T-cell (primary cell): ENCODE measurements at regions of chr1 and their contacts with region 1.

Region 1: GRCh38 chr1:194117582-194117981 is 931.2 kb upstream of the B3GALT2 start:
- DNase-seq: no peak
- ATAC-seq: no peak
- H3K4me3 ChIP-seq: no peak overlapping the region
- H3K4me3 Mint-ChIP-seq: no peak overlapping the region
- H3K27ac ChIP-seq: no peak overlapping the region
- H3K27ac Mint-ChIP-seq: no peak overlapping the region
- H3K4me1 ChIP-seq: no peaks in the 10 kb centered on the region
- H3K4me1 Mint-ChIP-seq: no peaks in the 10 kb centered on the region
- H3K27me3 ChIP-seq: no peaks in the 10 kb centered on the region
- H3K27me3 Mint-ChIP-seq: no peaks in the 10 kb centered on the region

Region 2: GRCh38 chr1:194069168-194069830 is 48.3 kb before region 1 on chr1:
- CTCF ChIA-PET with region 1: no interaction called
- POLR2A ChIA-PET with region 1: no interaction called
- DNase-seq: no peak
- ATAC-seq: no peak
- H3K4me3 ChIP-seq: no peak overlapping the region
- H3K4me3 Mint-ChIP-seq: no peak overlapping the region
- H3K27ac ChIP-seq: no peak overlapping the region
- H3K27ac Mint-ChIP-seq: no peak overlapping the region
- H3K4me1 ChIP-seq: no peaks in the 10 kb centered on the region
- H3K4me1 Mint-ChIP-seq: peaks cover 0 to under 1% (median 0%) of the 10 kb centered on the region in 3 donors
- H3K27me3 ChIP-seq: no peaks in the 10 kb centered on the region
- H3K27me3 Mint-ChIP-seq: no peaks in the 10 kb centered on the region

Region 3: DNA sequence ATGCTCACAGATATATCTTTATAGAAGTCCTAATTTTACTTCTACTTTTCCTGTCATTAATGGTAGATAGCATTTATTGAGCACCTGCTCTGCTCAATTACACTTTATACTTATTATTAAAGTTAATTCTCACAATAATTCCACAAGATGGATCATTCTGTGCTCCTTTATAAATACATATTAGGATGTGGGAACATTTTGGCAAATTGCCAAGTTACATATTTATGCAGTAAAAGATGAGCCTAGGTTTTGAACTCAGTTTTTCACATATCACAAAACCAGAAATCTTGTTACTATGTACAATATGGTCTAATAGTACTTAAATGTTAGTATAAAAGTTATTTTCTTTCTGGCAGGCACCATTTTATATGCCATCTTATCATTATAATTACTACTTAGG is 36.1 kb before region 1 on chr1:
- CTCF ChIA-PET with region 1: no interaction called
- POLR2A ChIA-PET with region 1: no interaction called
- DNase-seq: no peak
- ATAC-seq: no peak
- H3K4me3 ChIP-seq: no peak overlapping the region
- H3K4me3 Mint-ChIP-seq: no peak overlapping the region
- H3K27ac ChIP-seq: no peak overlapping the region
- H3K27ac Mint-ChIP-seq: no peak overlapping the region
- H3K4me1 ChIP-seq: no peaks in the 10 kb centered on the region
- H3K4me1 Mint-ChIP-seq: peaks cover 0 to 2% (median 2%) of the 10 kb centered on the region in 3 donors
- H3K27me3 ChIP-seq: no peaks in the 10 kb centered on the region
- H3K27me3 Mint-ChIP-seq: no peaks in the 10 kb centered on the region

Region 4: GRCh38 chr1:194133163-194133562 is 15.6 kb after region 1 on chr1:
- CTCF ChIA-PET with region 1: interaction called in 1 of 2 experiments, 10 read pairs
- POLR2A ChIA-PET with region 1: no interaction called
- DNase-seq: no peak
- ATAC-seq: no peak
- H3K4me3 ChIP-seq: no peak overlapping the region
- H3K4me3 Mint-ChIP-seq: no peak overlapping the region
- H3K27ac ChIP-seq: no peak overlapping the region
- H3K27ac Mint-ChIP-seq: no peak overlapping the region
- H3K4me1 ChIP-seq: no peaks in the 10 kb centered on the region
- H3K4me1 Mint-ChIP-seq: peaks cover 13 to 19% (median 16%) of the 10 kb centered on the region in 3 donors
- H3K27me3 ChIP-seq: no peaks in the 10 kb centered on the region
- H3K27me3 Mint-ChIP-seq: no peaks in the 10 kb centered on the region